Activated naive CD8-positive, alpha-beta T cell treated with anti-CD3 and anti-CD28 coated beads, Interleukin-2, amount 10 ng/mL, durations not matched to agents 7 days and 5 days (primary cell): ENCODE measurements at regions of chr1 and their contacts with region 1.

Region 1: DNA sequence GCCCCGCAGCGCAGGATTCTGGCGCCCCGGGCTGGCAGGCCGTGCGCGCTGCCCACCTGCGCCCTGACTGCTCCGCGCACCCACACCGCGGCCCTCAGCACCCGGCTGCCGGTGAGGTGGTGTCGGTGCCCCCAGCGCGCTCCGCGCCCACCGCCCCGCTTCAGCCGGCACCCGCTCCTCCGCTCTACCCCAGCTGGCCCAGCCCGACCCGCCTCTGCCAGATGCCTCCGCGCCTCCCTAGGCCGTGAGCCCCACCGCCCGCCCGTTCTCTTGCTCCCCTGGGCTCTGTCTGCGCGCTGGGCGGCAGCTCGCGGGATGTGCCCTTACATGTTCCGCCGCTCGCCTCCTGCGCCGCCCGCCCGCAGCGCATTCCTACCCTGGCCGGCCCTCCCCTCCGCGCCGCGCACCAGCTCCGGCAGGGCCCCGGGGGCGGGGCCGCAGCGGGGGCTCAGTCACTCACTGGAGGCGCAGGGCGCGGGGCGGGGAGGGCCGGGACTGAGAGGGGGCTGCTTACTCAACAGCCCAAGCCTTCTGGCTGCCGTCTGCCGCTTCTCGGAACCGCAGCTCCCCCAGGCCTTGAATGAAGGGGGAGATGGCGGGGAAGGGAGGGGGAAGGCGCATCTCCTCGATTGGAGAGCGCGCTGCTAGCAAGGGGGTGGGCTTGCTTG is at the start of gene PHLDA3:
- DNase-seq: peak; percentile 76
- ATAC-seq: peak; percentile 86
- H3K4me3 Mint-ChIP-seq: peak within 1 kb of the TSS; percentile 88
- H3K27ac Mint-ChIP-seq: peak within 1 kb of the TSS; percentile 83
- H3K4me1 Mint-ChIP-seq: peaks cover 17% of the 10 kb centered on the region
- H3K27me3 Mint-ChIP-seq: peaks cover 43% of the 10 kb centered on the region
- total RNA-seq, gene PHLDA3: 11.3 to 13.2 TPM

Region 2: GRCh38 chr1:201447911-201448871 is 20.8 kb before region 1 on chr1:
- POLR2A ChIA-PET with region 1: interaction called, 14 read pairs
- DNase-seq: peak; percentile 74
- ATAC-seq: peak; percentile 96
- H3K4me3 Mint-ChIP-seq: no peak overlapping the region
- H3K27ac Mint-ChIP-seq: no peak overlapping the region
- H3K4me1 Mint-ChIP-seq: peaks cover 10% of the 10 kb centered on the region
- H3K27me3 Mint-ChIP-seq: peaks cover 41% of the 10 kb centered on the region

Region 3: DNA sequence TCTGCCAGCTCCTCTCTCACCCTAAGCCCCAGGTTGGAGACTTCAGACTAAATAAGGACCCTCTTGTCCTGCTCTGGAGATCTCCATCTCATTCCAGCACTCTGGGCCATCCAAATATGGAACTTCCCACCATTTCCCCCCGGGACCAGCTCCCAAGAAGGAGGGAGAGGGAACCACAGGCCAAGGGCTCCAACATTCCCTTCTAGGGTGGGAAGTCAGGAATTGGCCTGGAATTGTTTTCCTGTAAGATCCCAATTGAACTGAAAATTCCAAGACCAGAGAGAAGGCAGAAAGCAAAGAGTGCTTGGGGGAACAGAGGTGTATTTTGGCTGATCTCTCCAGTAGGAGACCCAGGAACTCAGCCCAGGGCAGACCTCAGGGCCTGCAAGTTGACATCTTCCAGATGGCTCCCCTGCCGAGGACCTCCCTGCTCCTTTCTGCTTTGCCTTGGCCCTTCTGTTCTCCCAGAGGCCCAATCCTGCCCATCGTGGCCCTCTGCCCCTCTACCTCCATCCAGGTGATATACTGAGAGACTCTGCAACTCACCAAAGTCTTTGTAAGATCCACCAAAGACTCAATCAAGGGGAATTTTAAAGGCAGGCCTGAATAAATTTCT is 23.0 kb after region 1 on chr1:
- POLR2A ChIA-PET with region 1: no interaction called
- DNase-seq: no peak
- ATAC-seq: no peak
- H3K4me3 Mint-ChIP-seq: no peak overlapping the region
- H3K27ac Mint-ChIP-seq: no peak overlapping the region
- H3K4me1 Mint-ChIP-seq: peaks cover 7% of the 10 kb centered on the region
- H3K27me3 Mint-ChIP-seq: no peaks in the 10 kb centered on the region